B cell (primary cell): ENCODE measurements at regions of chr14 and their contacts with region 1.

Region 1: DNA sequence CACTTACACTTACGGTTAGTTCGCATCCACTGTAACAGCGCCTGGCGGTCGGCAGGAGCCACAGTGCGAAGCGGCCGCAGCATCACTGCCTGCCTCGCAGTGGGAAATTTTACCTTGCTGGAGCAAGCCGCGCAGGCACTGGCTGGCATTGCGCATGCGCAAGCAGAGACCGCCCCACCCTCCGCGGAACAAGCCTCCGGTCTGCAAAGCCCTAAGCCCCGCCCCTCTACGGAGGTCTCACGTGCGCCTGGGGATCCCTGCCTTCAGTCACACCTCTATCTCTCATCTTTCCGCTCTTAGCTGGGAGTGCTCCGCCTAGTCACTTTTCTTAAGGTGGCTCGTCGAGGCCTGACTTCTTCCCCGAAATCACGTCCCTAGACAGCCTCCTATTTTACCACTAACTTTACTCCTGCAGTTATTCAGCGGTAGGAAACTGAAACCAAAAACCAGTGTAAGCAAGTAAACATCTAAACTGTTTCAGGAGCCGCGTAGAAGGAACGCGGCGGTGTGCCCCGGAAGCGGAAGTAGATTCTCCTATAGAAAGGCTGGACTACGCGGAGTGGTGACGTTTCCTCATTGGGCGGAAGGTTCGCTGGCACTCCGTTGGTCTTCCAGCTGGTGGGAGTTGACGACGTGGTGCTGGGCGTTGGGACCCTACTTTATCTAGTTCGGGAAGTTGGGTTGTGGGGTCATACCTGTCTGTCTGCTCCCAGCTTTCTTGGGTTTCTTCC is at the start of gene SRP54:
- DNase-seq: peak; percentile 99
- ATAC-seq: peak; percentile 91
- H3K4me3 ChIP-seq: peak within 1 kb of the TSS; percentile 71 to 99 (median 95)
- H3K4me3 Mint-ChIP-seq: no peak within 1 kb of the TSS
- H3K27ac ChIP-seq: peak within 1 kb of the TSS; percentile 95 to 97
- H3K27ac Mint-ChIP-seq: no peak within 1 kb of the TSS
- H3K4me1 ChIP-seq: peaks cover 25 to 26% of the 10 kb centered on the region in 2 donors
- H3K4me1 Mint-ChIP-seq: peaks cover 23% of the 10 kb centered on the region
- H3K27me3 ChIP-seq: no peaks in the 10 kb centered on the region
- H3K27me3 Mint-ChIP-seq: no peaks in the 10 kb centered on the region
- CTCF ChIP-seq: no peak
- total RNA-seq, gene SRP54: 54.9 and 59.5 TPM in 2 replicates

Region 2: DNA sequence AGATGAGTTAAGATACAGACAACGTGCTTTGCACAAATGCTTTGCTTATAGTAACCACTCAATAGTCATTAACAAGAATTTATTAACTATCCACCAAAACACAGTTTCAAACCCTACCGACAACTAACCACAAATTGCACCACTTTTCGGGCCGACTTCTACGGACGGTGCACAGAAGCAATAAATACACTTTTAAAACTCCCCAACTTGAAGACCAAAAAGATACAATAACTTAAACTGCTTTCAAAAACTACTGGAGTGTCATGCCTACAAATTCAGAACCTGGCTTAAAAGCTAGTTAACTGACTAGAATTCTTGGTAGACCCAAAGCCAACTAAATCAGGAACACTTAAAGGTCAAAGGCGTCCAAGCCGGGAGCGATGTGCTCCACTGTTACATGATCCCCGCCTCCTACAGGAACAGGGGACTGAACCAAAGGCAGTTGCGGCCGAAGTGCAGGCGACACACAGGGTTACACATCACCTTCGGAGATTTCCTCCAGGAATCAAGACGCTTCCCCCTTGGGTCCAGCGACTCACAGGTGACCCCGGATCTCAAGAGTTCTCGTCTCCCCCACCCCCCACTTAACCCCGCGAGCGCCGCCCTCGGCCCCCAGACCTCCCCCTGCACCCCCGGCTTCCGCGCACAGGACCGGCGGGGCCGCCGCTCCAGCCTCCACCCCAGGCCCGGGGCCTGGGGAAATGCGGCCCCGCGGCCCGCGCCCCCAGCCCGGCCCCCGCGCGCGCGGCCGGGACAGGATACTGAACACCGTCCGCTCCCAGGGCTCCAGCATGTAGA is 521.0 kb before region 1 on chr14:
- CTCF ChIA-PET with region 1: no interaction called
- POLR2A ChIA-PET with region 1: no interaction called
- intact Hi-C with region 1: loop called (anchors 1 kb)
- DNase-seq: peak; percentile 50
- ATAC-seq: no peak
- H3K4me3 ChIP-seq: peak overlapping the region; percentile 50 to 95 (median 64)
- H3K4me3 Mint-ChIP-seq: peak overlapping the region; percentile 86
- H3K27ac ChIP-seq: peak overlapping the region; percentile 16 to 60
- H3K27ac Mint-ChIP-seq: peak overlapping the region; percentile 91
- H3K4me1 ChIP-seq: peaks cover 8 to 15% of the 10 kb centered on the region in 2 donors
- H3K4me1 Mint-ChIP-seq: peaks cover 18% of the 10 kb centered on the region
- H3K27me3 ChIP-seq: no peaks in the 10 kb centered on the region
- H3K27me3 Mint-ChIP-seq: no peaks in the 10 kb centered on the region
- CTCF ChIP-seq: no peak

Region 3: DNA sequence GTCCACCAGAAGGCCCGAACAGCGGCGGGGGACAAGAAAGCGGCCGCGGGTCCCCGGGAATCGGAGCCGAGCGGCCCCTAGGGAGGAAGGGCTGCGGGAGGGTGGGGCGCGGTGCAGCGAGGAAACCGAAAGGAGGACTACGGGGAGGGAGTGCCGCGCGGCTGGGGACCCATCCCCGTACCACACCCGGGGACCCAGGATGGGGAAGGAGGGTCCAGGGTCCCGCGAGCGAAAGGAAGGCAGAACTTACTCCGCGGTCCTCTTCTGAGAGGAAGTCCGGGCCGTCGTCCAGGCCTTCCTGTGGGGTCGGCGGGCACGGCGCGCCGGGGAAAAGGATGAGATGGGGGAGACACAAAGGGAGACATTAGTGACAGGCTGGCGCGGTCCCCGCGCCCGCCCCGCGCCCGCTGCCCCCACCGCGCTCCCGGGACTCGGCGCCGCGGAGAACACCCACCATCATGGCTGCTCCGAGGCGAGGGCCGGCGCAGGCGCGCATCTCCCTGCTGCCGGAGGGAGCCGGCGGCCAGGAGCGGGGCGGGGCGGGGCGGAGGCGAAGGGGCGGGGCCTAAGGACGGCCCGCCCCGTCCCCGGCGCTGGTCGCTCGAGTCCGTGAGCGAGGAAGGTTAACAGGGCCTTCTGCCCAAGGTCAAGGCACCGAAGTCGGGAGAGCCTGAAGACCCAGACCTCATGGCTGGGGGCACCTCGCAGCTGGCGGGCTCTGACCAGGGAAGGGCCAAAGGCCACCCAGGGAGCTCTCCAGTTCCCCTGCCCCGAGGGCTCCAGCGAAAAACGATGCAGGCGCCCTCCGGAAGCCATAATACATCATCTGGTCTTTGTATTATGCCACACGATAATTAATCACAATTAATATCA is 352.7 kb before region 1 on chr14 and contains the start of gene SNX6:
- CTCF ChIA-PET with region 1: no interaction called
- POLR2A ChIA-PET with region 1: no interaction called
- intact Hi-C with region 1: loop called (anchors 2 kb)
- DNase-seq: peak; percentile 89
- ATAC-seq: peak; percentile 98
- H3K4me3 ChIP-seq: peak within 1 kb of the TSS; percentile 50 to 98 (median 96)
- H3K4me3 Mint-ChIP-seq: peak within 1 kb of the TSS; percentile 95
- H3K27ac ChIP-seq: peak within 1 kb of the TSS; percentile 85 to 94
- H3K27ac Mint-ChIP-seq: peak within 1 kb of the TSS; percentile 93
- H3K4me1 ChIP-seq: peaks cover 11 to 18% of the 10 kb centered on the region in 2 donors
- H3K4me1 Mint-ChIP-seq: peaks cover 18% of the 10 kb centered on the region
- H3K27me3 ChIP-seq: peaks cover 0 to 3% (median 0%) of the 10 kb centered on the region in 4 experiments
- H3K27me3 Mint-ChIP-seq: no peaks in the 10 kb centered on the region
- CTCF ChIP-seq: no peak
- total RNA-seq, gene SNX6: 61.0 and 66.3 TPM in 2 replicates

Region 4: DNA sequence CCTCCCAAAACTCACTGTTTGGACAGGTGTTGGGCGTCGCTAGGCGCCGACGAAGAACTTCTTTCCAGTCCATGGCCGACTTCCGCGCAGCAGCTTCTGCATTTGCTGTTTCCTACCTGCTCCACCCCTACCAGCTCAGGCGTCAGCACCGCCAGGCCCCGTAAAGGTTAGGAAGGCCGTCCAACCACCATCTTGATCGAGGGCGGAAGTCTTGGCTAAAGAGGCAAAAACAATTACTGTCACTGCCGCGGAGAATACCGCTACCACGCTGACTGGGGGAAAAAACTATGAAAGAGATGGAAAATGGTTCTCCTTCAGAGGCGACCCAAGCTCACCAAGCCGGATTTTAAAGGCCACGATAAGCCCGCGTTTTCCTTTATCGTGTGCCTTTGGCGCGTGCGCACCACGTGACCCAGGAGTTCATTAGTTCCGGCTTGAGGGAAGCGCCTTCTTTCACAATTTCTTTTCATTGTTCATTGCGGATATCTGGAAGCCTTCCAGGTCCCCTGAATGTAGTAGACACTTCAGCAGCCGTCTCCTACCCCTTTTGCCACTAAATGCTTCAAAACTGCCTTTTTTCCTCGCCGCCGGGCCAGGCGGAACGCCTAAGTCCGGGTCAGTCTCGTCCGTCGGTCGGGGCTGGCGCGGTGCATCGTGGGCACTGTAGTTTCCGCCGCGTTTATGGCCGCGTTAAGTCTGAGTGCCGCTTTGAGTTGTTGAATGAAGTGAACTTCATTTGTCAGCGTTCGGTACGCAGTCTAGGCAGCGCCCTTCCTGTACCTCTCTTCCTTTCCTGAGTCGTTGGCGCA is 139.5 kb after region 1 on chr14 and contains the starts of genes PPP2R3C and PRORP:
- CTCF ChIA-PET with region 1: interaction called, 4 read pairs
- POLR2A ChIA-PET with region 1: interaction called, 8 read pairs
- intact Hi-C with region 1: loop called (anchors 1 kb)
- DNase-seq: peak; percentile 97
- ATAC-seq: peak; percentile 89
- H3K4me3 ChIP-seq: peak within 1 kb of the TSS; percentile 70 to 97 (median 77)
- H3K4me3 Mint-ChIP-seq: peak within 1 kb of the TSS; percentile 100
- H3K27ac ChIP-seq: peak within 1 kb of the TSS; percentile 94 to 100
- H3K27ac Mint-ChIP-seq: peak within 1 kb of the TSS; percentile 99
- H3K4me1 ChIP-seq: peaks cover 19 to 24% of the 10 kb centered on the region in 2 donors
- H3K4me1 Mint-ChIP-seq: peaks cover 53% of the 10 kb centered on the region
- H3K27me3 ChIP-seq: no peaks in the 10 kb centered on the region
- H3K27me3 Mint-ChIP-seq: no peaks in the 10 kb centered on the region
- CTCF ChIP-seq: no peak
- total RNA-seq, gene PPP2R3C: 40.8 and 41.7 TPM in 2 replicates
- total RNA-seq, gene PRORP: 16.4 and 22.2 TPM in 2 replicates

Region 5: GRCh38 chr14:35808076-35808652 is 825.6 kb after region 1 on chr14:
- CTCF ChIA-PET with region 1: no interaction called
- POLR2A ChIA-PET with region 1: no interaction called
- intact Hi-C with region 1: loop called (anchors 5 kb)
- DNase-seq: no peak
- ATAC-seq: no peak
- H3K4me3 ChIP-seq: peak overlapping the region; percentile 57 to 81 (median 70)
- H3K4me3 Mint-ChIP-seq: peak overlapping the region; percentile 98
- H3K27ac ChIP-seq: peak overlapping the region; percentile 78 to 88
- H3K27ac Mint-ChIP-seq: peak overlapping the region; percentile 95
- H3K4me1 ChIP-seq: peaks cover 12 to 14% of the 10 kb centered on the region in 2 donors
- H3K4me1 Mint-ChIP-seq: peaks cover 29% of the 10 kb centered on the region
- H3K27me3 ChIP-seq: no peaks in the 10 kb centered on the region
- H3K27me3 Mint-ChIP-seq: no peaks in the 10 kb centered on the region
- CTCF ChIP-seq: no peak